ENCODE measurements at regions of chr1 and their contacts with region 1.

Region 1: GRCh38 chr1:61049850-61050540 is 32.4 kb upstream of the NFIA start:
- DNase-seq: peak; percentile 12
- H3K4me3 ChIP-seq: peak overlapping the region; percentile 64
- H3K27me3 ChIP-seq: peaks cover 4% of the 10 kb centered on the region
- CTCF ChIP-seq: peak; percentile 97

Region 2: DNA sequence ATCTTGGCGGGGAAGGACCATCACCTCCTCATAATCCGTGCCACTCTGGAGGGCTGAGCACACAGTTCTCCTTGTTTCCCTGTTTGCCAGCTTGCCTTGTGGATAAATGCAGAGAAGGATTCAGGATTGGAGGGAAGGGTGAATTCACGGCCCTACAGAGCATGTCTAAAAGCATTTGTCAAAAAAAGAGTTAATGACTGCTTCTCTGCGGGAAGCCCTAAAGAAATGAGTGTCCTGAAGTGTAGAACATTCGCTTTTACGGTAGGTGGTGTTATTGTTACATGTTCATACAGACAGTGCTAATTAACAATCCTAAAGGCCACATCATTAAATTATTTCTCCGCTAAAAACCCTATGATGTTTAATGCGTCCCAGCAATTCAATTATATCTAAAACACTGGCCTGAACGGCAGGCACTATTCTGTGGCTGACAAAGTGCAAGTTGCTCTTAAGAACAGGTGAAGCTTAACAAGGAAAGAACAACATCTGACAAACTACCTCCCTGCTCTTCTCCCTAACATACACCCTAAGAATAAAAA is 80.0 kb before region 1 on chr1:
- CTCF ChIA-PET with region 1: interaction called, 10 read pairs
- POLR2A ChIA-PET with region 1: no interaction called
- DNase-seq: no peak
- H3K4me3 ChIP-seq: no peak overlapping the region
- H3K27me3 ChIP-seq: peaks cover 3% of the 10 kb centered on the region
- CTCF ChIP-seq: peak; percentile 29

Region 3: GRCh38 chr1:61077676-61078541 is 27.9 kb after region 1 on chr1:
- CTCF ChIA-PET with region 1: interaction called, 18 read pairs
- POLR2A ChIA-PET with region 1: no interaction called
- DNase-seq: peak; percentile 97
- H3K4me3 ChIP-seq: peak overlapping the region; percentile 49
- H3K27me3 ChIP-seq: no peaks in the 10 kb centered on the region
- CTCF ChIP-seq: no peak

Region 4: DNA sequence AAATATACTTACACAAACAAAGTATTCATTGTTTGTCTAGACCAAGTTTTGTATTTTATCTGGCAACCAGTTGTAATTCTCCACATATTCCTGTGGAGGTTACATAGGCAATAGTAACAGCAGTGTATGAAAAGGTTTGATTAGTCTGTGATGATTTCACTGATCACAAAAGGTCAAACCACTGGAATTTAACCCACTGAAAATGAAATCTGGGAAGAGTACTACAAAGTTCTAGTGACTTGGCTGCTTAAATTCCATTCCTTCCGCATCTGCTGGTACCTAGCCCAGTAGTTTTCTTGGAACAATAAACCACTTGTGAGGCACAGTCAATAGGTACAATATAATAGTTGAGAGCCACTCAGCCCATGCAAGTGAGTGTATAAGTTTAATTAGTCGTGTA is 237.7 kb after region 1 on chr1:
- CTCF ChIA-PET with region 1: no interaction called
- POLR2A ChIA-PET with region 1: no interaction called
- DNase-seq: peak; percentile 9
- H3K4me3 ChIP-seq: no peak overlapping the region
- H3K27me3 ChIP-seq: no peaks in the 10 kb centered on the region
- CTCF ChIP-seq: no peak

Region 5: GRCh38 chr1:61453111-61453961 is 403.3 kb after region 1 on chr1:
- CTCF ChIA-PET with region 1: interaction called, 28 read pairs
- POLR2A ChIA-PET with region 1: no interaction called
- DNase-seq: peak; percentile 67
- H3K4me3 ChIP-seq: no peak overlapping the region
- H3K27me3 ChIP-seq: no peaks in the 10 kb centered on the region; the same call in 1 of the 2 replicates
- CTCF ChIP-seq: peak; percentile 88

Region 6: DNA sequence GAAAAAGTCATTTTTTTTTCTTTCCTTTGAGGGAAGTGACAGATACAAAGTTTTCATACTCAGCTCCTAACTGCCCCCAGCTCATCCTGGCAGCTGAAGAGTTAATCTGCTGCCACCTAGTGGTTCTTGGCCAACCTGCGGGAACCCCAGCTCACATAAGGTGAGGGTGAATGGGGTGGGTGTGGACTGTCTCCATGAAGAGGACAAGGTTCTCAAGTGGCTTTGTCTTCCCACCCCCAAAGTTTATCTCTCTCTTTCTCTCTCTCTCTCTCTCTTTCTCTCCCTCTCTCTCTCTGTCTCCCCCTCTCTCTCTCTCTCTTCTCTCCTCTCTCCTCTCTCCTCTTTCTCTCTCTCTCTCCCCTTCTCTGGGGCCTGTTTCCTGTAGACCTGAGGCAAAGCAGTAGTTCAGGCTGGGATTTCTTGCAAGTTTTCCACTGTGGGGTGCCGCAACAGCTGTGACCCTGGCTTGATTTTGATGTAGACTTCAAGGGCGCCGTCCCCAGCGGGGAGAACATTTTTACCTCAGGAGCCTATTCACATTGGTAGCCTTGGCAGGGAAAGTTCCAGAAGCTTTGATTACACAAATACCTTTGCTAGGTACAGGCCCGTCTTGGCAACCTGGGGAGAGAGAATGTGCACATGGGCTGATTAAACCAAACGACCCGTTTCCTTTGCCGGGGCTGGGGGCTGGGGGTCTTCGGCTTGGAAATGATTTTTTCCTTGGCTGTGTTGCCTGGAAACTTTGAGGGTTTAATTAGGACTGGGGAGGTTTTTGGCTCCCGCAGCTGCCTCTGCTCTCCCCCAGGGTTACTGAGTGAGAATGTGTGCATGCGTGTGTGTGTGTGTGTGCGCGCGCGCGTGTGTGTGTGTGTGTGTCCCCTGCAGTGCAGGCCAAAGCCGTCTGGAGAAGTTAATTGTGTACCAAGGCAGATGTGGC is 539.0 kb after region 1 on chr1:
- CTCF ChIA-PET with region 1: interaction called, 11 read pairs
- POLR2A ChIA-PET with region 1: no interaction called
- DNase-seq: no peak
- H3K4me3 ChIP-seq: no peak overlapping the region
- H3K27me3 ChIP-seq: 0 out of 2 replicates have a peak, but pooled peaks cover 1% of the 10 kb centered on the region
- CTCF ChIP-seq: peak; percentile 80

Region 7: DNA sequence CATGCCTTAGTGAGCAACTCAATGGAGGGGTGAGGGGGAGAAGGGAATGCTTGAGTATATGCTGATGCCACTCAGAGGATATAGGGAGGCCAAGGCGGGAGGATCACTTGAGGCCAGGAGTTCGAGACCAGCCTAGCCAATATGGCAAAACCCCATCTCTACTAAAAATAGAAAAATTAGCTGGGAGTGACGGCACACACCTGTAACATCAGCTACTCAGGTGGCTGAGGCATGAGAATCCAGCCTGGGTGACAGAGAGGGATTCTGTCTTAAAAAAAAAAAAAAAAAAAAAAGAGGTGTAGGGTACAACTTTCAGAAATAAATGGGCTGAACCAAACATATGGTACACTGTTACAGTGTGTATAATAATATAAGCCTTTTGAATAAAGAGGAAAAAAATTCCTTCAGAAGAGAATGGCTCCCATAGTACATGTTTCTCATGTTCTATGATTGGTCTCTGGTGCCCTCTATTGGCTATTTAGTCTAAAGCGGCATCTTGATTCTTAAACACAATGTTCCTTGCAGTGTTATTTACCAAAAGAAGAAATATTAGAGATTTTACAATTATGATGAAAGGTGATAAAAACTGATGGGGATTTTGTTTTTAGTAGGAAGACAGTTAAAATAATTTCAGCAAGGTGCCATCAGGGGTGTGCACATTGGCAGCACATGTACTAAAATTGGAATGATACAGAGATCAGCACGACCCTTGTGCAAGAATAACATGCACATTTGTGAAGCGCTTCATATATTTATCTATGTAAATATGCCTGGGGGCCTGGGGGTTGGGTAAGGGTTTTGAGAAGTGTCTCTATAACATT is 802.1 kb after region 1 on chr1:
- CTCF ChIA-PET with region 1: interaction called, 34 read pairs
- POLR2A ChIA-PET with region 1: no interaction called
- DNase-seq: no peak
- H3K4me3 ChIP-seq: no peak overlapping the region
- H3K27me3 ChIP-seq: no peaks in the 10 kb centered on the region
- CTCF ChIP-seq: peak; percentile 70